ENCODE measurements at regions of chr9 and their contacts with region 1.

Region 1: DNA sequence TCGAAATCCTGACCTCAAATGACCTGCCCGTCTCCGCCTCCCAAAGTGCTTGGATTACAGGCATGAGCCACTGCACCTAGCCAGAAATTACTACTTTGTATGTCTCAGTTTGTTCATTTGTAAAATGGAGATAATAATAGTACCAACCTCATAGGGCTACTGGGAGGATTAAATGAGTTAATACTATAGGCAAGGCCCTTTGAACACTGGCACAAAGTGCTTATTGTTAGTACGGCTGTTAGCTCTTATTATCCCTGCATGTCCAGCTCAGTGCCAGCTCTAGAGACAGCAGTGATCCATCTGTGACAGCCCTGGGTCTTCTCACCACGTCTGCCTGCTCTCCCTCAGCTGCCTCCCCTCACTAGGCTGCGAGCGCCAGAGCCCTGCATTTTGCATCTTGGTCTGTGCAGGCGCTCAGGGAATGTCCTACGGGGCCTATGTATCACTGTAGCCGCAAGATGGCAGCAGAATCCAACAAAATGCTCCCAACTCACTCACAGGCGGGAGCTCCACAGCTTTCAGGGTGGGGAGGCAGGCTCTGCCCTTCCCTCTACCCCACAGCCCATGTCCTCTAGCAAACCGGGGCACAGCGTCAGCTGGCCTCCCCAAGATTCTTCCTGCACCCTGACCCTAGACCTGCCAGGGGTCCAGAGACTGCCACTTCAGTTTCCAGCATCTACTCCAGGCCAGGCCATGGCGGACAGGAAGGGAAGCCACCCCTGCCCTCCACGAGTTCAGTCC is 17.7 kb upstream of the AKNA start:
- DNase-seq: no peak
- ATAC-seq: peak; percentile 98
- H3K4me3 ChIP-seq: no peak overlapping the region
- H3K27ac ChIP-seq: no peak overlapping the region
- H3K4me1 ChIP-seq: peaks cover 5% of the 10 kb centered on the region; the same call in 1 of the 2 replicates
- H3K27me3 ChIP-seq: no peaks in the 10 kb centered on the region; a peak in 1 of 4 replicates
- CTCF ChIP-seq: peak; percentile 76 to 93 (median 84)
- EP300 ChIP-seq: no peak
- POLR2A ChIP-seq: no peak
- RAD21 ChIP-seq: peak; percentile 91

Region 2: DNA sequence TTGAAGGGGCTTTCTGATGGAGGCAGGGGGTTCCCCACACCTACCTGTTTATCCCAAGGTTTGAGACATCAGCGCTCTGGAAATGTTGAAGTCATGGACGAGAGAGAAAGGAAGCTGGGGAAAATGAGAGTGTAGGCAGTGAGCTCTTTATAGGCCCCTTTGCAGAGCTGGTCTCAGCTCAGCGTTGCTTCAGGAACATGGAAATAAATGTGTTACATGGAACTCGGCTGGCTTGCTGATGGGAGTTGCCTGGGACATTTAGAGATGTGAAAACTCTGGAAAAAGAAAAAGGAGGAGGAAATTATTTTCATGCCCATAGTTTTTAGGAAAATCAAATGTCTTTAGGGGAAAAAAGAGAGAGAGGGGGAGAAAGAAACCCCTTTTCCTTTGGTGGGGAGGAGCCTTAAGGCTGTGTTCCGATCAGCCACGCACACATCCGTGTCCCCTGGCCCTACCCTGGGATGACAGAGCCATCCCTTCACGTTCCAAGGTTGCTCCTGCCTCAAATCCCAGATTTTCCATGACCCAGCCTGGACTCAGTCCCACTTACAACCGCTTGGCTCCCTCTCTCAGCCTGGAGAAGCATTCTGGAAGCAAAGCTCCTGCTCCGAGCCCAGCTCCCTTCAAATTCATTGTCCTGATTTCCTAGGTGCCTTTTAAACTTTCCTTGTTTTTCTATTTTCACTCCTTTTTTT is 171.8 kb before region 1 on chr9:
- CTCF ChIA-PET with region 1: no interaction called
- POLR2A ChIA-PET with region 1: no interaction called
- RAD21 ChIA-PET with region 1: no interaction called
- SMC1A ChIA-PET with region 1: no interaction called
- in situ Hi-C with region 1: no loop called
- intact Hi-C with region 1: no loop called
- DNase-seq: no peak
- ATAC-seq: no peak
- H3K4me3 ChIP-seq: no peak overlapping the region
- H3K27ac ChIP-seq: no peak overlapping the region
- H3K4me1 ChIP-seq: no peaks in the 10 kb centered on the region
- H3K27me3 ChIP-seq: peaks cover 3 to 15% of the 10 kb centered on the region in 2 experiments; a peak in 3 of 4 replicates
- CTCF ChIP-seq: no peak
- EP300 ChIP-seq: no peak
- POLR2A ChIP-seq: no peak
- RAD21 ChIP-seq: no peak

Region 3: GRCh38 chr9:114339130-114339908 is 66.1 kb before region 1 on chr9:
- CTCF ChIA-PET with region 1: interaction called, 31 read pairs
- POLR2A ChIA-PET with region 1: interaction called, 3 read pairs
- RAD21 ChIA-PET with region 1: interaction called, 6 read pairs
- SMC1A ChIA-PET with region 1: interaction called, 15 read pairs
- in situ Hi-C with region 1: no loop called
- intact Hi-C with region 1: loop called (anchors 1 kb)
- DNase-seq: peak; percentile 46
- ATAC-seq: peak; percentile 96
- H3K4me3 ChIP-seq: no peak overlapping the region
- H3K27ac ChIP-seq: no peak overlapping the region
- H3K4me1 ChIP-seq: peaks cover 6% of the 10 kb centered on the region; the same call in 1 of the 2 replicates
- H3K27me3 ChIP-seq: no peaks in the 10 kb centered on the region
- CTCF ChIP-seq: peak; percentile 89 to 96 (median 90); a peak in 5 of 6 replicates
- EP300 ChIP-seq: 0 out of 4 replicates have a peak, but pooled peaks of 1 of the 2 experiments have one; percentile 35
- POLR2A ChIP-seq: no peak; the same call in 1 of the 2 replicates
- RAD21 ChIP-seq: peak; percentile 75

Region 4: GRCh38 chr9:114434878-114435311 is 29.4 kb after region 1 on chr9:
- CTCF ChIA-PET with region 1: interaction called, 10 read pairs
- POLR2A ChIA-PET with region 1: no interaction called
- RAD21 ChIA-PET with region 1: interaction called, 8 read pairs
- SMC1A ChIA-PET with region 1: interaction called, 8 read pairs
- in situ Hi-C with region 1: no loop called
- intact Hi-C with region 1: no loop called
- DNase-seq: no peak
- ATAC-seq: peak; percentile 77
- H3K4me3 ChIP-seq: no peak overlapping the region
- H3K27ac ChIP-seq: no peak overlapping the region
- H3K4me1 ChIP-seq: no peaks in the 10 kb centered on the region
- H3K27me3 ChIP-seq: peaks cover 0 to 4% of the 10 kb centered on the region in 2 experiments; a peak in 1 of 4 replicates
- CTCF ChIP-seq: peak; percentile 58 to 75 (median 71)
- EP300 ChIP-seq: no peak
- POLR2A ChIP-seq: no peak
- RAD21 ChIP-seq: peak; percentile 91

Region 5: GRCh38 chr9:114452219-114453165 is 47.0 kb after region 1 on chr9:
- CTCF ChIA-PET with region 1: interaction called, 11 read pairs
- POLR2A ChIA-PET with region 1: interaction called, 3 read pairs
- RAD21 ChIA-PET with region 1: interaction called, 7 read pairs
- SMC1A ChIA-PET with region 1: interaction called, 4 read pairs
- in situ Hi-C with region 1: no loop called
- intact Hi-C with region 1: no loop called
- DNase-seq: no peak
- ATAC-seq: peak; percentile 49
- H3K4me3 ChIP-seq: no peak overlapping the region
- H3K27ac ChIP-seq: no peak overlapping the region
- H3K4me1 ChIP-seq: peaks cover 17% of the 10 kb centered on the region
- H3K27me3 ChIP-seq: no peaks in the 10 kb centered on the region; a peak in 1 of 4 replicates
- CTCF ChIP-seq: no peak
- EP300 ChIP-seq: no peak
- POLR2A ChIP-seq: no peak
- RAD21 ChIP-seq: no peak

Region 6: GRCh38 chr9:114487607-114488300 is 82.3 kb after region 1 on chr9:
- CTCF ChIA-PET with region 1: interaction called, 57 read pairs
- POLR2A ChIA-PET with region 1: interaction called, 7 read pairs
- RAD21 ChIA-PET with region 1: interaction called, 6 read pairs
- SMC1A ChIA-PET with region 1: interaction called, 9 read pairs
- in situ Hi-C with region 1: no loop called
- intact Hi-C with region 1: no loop called
- DNase-seq: peak; percentile 34
- ATAC-seq: peak; percentile 80
- H3K4me3 ChIP-seq: no peak overlapping the region
- H3K27ac ChIP-seq: no peak overlapping the region
- H3K4me1 ChIP-seq: peaks cover 15% of the 10 kb centered on the region
- H3K27me3 ChIP-seq: no peaks in the 10 kb centered on the region
- CTCF ChIP-seq: peak; percentile 90 to 93 (median 93); a peak in 5 of 6 replicates
- EP300 ChIP-seq: no peak
- POLR2A ChIP-seq: no peak
- RAD21 ChIP-seq: peak; percentile 85

Region 7: GRCh38 chr9:114511968-114512874 is 106.8 kb after region 1 on chr9:
- CTCF ChIA-PET with region 1: interaction called, 109 read pairs
- POLR2A ChIA-PET with region 1: no interaction called
- RAD21 ChIA-PET with region 1: interaction called, 43 read pairs
- SMC1A ChIA-PET with region 1: interaction called, 44 read pairs
- in situ Hi-C with region 1: no loop called
- intact Hi-C with region 1: loop called (anchors 5 kb)
- DNase-seq: no peak
- ATAC-seq: no peak
- H3K4me3 ChIP-seq: no peak overlapping the region
- H3K27ac ChIP-seq: no peak overlapping the region
- H3K4me1 ChIP-seq: no peaks in the 10 kb centered on the region
- H3K27me3 ChIP-seq: peaks cover 5% of the 10 kb centered on the region in 2 experiments; a peak in 3 of 4 replicates
- CTCF ChIP-seq: no peak
- EP300 ChIP-seq: no peak
- POLR2A ChIP-seq: no peak
- RAD21 ChIP-seq: no peak

Region 8: DNA sequence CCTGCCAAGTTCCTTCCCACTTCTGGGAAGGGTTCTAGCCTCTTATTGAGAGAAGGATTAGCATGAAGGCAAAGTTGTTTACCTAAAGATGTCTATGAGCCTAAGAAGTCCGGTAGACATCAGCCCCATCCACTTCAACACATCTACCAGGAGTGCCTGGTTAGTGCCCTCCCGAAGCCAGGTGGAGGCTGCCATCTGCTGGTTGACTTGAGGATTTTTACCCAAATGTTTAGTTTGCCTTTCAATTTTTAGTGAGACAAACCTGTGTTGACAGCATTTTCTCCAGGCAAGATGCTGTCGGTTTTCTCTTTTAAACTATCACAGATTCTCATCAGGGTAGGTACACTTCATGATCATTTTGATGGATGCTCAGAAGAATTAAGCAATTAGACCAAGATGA is 608.5 kb after region 1 on chr9:
- CTCF ChIA-PET with region 1: interaction called, 3 read pairs
- POLR2A ChIA-PET with region 1: no interaction called
- RAD21 ChIA-PET with region 1: interaction called, 4 read pairs
- SMC1A ChIA-PET with region 1: no interaction called
- in situ Hi-C with region 1: loop called (anchors 5 kb)
- intact Hi-C with region 1: loop called (anchors 1 kb)
- DNase-seq: no peak
- ATAC-seq: peak; percentile 90
- H3K4me3 ChIP-seq: no peak overlapping the region
- H3K27ac ChIP-seq: no peak overlapping the region
- H3K4me1 ChIP-seq: no peaks in the 10 kb centered on the region
- H3K27me3 ChIP-seq: peaks cover 0 to 2% of the 10 kb centered on the region in 2 experiments; a peak in 3 of 4 replicates
- CTCF ChIP-seq: peak; percentile 63 to 86 (median 68)
- EP300 ChIP-seq: no peak
- POLR2A ChIP-seq: no peak
- RAD21 ChIP-seq: peak; percentile 98

Measured in GM12878 (cell line).